Motor neuron (in vitro differentiated cells): ENCODE measurements at regions of chr3 and their contacts with region 1.

Region 1: DNA sequence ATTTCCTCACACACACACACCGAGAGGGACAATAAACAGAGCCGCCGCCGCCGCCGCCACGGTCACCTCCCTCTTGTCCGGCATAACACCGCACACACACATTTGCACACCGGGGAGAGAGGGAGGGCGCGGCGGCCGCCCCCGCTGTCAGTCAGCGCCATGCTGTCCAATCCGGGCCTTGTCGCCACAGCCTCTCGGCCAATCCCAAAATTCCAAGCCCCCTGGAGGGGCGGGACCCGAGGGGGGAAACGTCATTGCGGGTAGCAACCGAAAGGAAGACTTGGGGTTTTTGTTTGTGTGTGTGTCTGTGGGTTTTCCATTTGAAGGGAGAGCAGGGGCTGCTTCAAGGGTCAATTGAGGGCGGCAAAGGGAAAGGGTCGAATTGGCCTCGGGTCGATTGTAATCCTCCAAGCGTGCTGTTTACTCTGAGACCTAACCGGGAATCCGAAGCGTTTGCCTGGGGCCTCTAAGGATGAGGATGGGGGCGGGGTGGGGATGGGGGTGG is at the start of gene TOP2B:
- ATAC-seq: peak; percentile 90 to 97 (median 94)
- H3K4me3 ChIP-seq: peak within 1 kb of the TSS; percentile 67 to 96 (median 84)
- H3K27ac ChIP-seq: peak within 1 kb of the TSS; percentile 94 to 95
- H3K4me1 ChIP-seq: peaks cover 10 to 20% of the 10 kb centered on the region in 2 donors
- total RNA-seq, gene TOP2B: 149 to 271 (median 208) TPM

Region 2: GRCh38 chr3:25831578-25831977 is 166.7 kb after region 1 on chr3:
- in situ Hi-C with region 1: loop called in 1 of 9 experiments (anchors 25 kb)
- ATAC-seq: peak in 3 of 8 experiments; percentile 62 to 74 (median 66)
- H3K4me3 ChIP-seq: no peak overlapping the region
- H3K27ac ChIP-seq: no peak overlapping the region
- H3K4me1 ChIP-seq: no peaks in the 10 kb centered on the region